Posterior vena cava (tissue), 2 donors: ENCODE measurements at regions of chr4 and their contacts with region 1.

Region 1: GRCh38 chr4:19266566-19266965 is 985.1 kb upstream of the SLIT2 start:
- DNase-seq: no peak

Region 2: GRCh38 chr4:19241895-19242294 is 24.7 kb before region 1 on chr4:
- intact Hi-C with region 1: loop called in 1 of 2 experiments (anchors 1 kb)
- DNase-seq: no peak